ENCODE measurements at regions of chr1 and their contacts with region 1.

Region 1: GRCh38 chr1:101357444-101357986 is 120.7 kb downstream of the S1PR1 start:
- DNase-seq: peak; percentile 74
- ATAC-seq: peak; percentile 99
- H3K4me3 ChIP-seq: no peak overlapping the region
- H3K27ac ChIP-seq: no peak overlapping the region
- H3K4me1 ChIP-seq: no peaks in the 10 kb centered on the region
- H3K27me3 ChIP-seq: no peaks in the 10 kb centered on the region
- CTCF ChIP-seq: peak; percentile 82
- EP300 ChIP-seq: no peak
- POLR2A ChIP-seq: no peak
- RAD21 ChIP-seq: peak; percentile 46

Region 2: GRCh38 chr1:100921109-100921706 is 436.3 kb before region 1 on chr1:
- CTCF ChIA-PET with region 1: interaction called, 5 read pairs
- POLR2A ChIA-PET with region 1: no interaction called
- in situ Hi-C with region 1: no loop called
- intact Hi-C with region 1: loop called (anchors 1 kb)
- DNase-seq: peak; percentile 35
- ATAC-seq: no peak
- H3K4me3 ChIP-seq: no peak overlapping the region
- H3K27ac ChIP-seq: no peak overlapping the region
- H3K4me1 ChIP-seq: peaks cover 8% of the 10 kb centered on the region
- H3K27me3 ChIP-seq: no peaks in the 10 kb centered on the region
- CTCF ChIP-seq: peak; percentile 58
- EP300 ChIP-seq: no peak
- POLR2A ChIP-seq: no peak
- RAD21 ChIP-seq: peak; percentile 16; the same call in 1 of the 2 replicates

Region 3: DNA sequence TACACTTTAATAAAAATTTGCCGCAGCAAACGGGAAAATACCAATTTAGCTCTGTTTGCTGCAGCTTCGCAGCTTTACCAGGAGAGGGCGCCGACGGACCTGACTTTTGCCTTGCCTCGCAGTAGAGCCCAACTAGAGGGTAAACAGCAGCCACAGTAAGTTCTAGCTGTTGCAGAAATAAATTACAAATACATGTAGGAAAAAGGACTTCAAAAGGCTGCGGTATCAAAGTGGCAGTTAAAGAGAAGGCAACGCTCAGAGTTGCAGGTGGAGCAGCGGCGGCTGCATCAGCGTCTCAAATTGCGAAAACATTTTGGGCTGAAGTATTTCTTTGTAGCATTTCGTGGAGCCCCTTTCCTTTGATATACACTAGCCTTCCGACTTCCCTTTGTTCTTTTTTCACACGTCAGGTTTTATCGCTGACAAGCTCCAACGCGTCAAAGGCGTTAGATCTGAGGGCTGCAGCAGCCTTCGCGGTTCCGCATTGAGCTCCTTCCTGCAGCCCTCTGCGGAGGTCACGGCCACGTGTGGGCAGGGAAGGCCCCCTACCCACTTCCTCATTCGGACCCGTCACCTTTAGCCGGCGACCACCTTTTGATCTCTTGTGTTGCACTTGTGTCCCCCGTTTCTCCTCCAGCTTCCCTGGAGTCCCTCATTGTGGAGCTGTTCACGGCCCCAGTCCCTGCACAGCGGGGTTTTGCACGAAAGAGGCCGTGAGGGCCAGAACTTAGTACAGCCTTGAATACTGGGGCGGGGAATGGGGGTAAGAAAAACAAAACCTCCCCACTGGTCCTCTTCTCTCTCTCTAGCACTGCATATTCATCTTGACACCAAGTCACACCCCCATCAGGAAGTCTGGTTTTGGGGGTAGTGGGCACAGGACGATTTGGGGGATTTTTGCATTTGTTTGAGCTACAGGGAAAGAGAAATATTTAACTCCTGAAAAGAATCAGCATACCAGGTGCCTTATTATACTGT is 47.9 kb before region 1 on chr1:
- CTCF ChIA-PET with region 1: interaction called, 18 read pairs
- POLR2A ChIA-PET with region 1: interaction called, 4 read pairs
- in situ Hi-C with region 1: loop called (anchors 5 kb)
- intact Hi-C with region 1: loop called (anchors 1 kb)
- DNase-seq: peak; percentile 35
- ATAC-seq: peak; percentile 83
- H3K4me3 ChIP-seq: peak overlapping the region in 2 of 3 experiments; percentile 38 to 56; a peak in 3 of 6 replicates
- H3K27ac ChIP-seq: no peak overlapping the region
- H3K4me1 ChIP-seq: peaks cover 10% of the 10 kb centered on the region; the same call in 1 of the 2 replicates
- H3K27me3 ChIP-seq: peaks cover 1 to 47% of the 10 kb centered on the region in 2 experiments; a peak in 2 of 5 replicates
- CTCF ChIP-seq: peak; percentile 82
- EP300 ChIP-seq: no peak
- POLR2A ChIP-seq: no peak
- RAD21 ChIP-seq: 0 out of 2 replicates have a peak, but pooled peaks have one; percentile 13